Esophagus squamous epithelium (tissue), 5 donors: ENCODE measurements at regions of chr18 and their contacts with region 1.

Region 1: GRCh38 chr18:76398896-76399612 is 96.0 kb downstream of the ZNF516 start:
- DNase-seq: no peak
- H3K4me3 ChIP-seq: no peak overlapping the region
- H3K27ac ChIP-seq: peak overlapping the region in 1 of 4 donors; percentile 26
- H3K4me1 ChIP-seq: peaks cover 4 to 24% (median 10%) of the 10 kb centered on the region in 3 donors
- H3K27me3 ChIP-seq: no peaks in the 10 kb centered on the region
- CTCF ChIP-seq: peak; percentile 84 to 97 (median 94)
- POLR2A ChIP-seq: no peak

Region 2: DNA sequence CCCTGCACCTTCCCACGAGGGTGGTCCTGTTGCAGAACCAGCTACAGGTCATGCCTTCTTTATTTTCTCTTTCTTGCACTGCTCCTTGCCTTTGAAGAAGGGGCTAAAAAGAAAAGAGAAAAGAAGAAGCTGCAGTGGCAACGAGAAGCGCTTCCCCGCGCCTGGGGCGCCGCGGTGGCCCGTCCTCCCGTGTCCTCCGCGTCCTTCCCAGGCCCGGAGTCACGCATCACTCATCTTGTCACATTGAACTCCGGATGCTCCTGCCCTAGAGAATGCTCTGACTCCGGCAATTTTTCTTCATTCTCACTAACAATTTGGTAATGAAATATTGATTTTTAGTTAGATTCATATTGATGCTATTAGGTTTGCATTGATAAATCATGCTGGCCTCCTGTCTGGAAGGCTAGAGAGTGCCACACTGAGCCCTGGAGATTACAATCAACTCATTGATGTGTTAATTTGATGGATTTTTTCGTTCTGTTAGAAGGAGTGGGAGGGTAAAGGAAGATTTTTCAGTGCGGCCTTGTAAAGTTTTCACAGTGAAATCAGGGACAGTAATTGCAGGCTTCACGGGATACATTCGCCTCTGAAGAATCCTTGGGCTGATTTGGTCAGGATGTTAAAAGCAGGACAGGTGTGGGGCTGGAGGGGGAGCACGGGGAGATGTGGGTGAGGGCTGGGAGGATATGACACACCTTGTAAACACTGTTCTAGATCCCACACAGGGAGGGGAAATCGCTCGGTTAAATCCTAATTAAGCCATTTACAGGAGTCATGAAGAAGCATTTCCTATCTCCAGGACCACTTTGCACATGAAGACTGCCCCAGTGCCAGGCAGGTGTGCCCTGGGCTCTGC is 253.3 kb before region 1 on chr18:
- intact Hi-C with region 1: no loop called
- DNase-seq: no peak
- H3K4me3 ChIP-seq: no peak overlapping the region
- H3K27ac ChIP-seq: no peak overlapping the region
- H3K4me1 ChIP-seq: no peaks in the 10 kb centered on the region
- H3K27me3 ChIP-seq: no peaks in the 10 kb centered on the region
- CTCF ChIP-seq: no peak
- POLR2A ChIP-seq: no peak

Region 3: DNA sequence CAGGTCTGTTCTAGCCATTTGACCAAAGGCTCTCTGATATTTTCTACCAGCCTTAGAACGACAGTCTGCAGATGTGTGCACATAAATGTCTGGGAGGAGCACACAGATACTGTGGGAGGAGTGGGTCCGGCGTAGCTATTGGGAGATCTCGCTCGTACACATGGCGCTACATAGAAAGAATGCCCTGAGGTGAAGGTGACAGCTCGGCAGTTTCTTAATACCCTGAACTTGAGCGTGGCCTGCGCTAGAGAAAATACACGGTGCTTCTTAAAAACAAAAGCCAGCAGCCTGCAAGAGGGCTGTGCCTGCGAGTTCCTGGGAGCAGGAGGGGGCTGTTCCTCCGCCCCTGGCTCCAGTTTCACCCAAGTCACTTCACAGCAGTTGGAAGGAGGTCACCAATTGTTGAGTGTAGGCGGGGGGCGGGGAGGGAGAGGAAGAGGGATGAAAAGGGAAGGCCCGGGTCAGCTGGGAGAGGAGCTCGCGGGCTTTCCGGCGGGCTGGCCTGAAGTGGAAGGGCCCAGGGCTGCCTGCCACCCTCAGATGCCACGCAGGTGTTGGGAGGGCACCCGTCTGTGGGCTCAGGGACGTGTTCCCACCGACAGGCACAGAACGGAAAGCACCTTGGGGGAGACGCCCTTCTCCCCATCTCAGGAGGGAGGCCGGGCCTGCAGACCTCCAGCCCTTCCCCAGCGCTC is 220.7 kb after region 1 on chr18:
- intact Hi-C with region 1: loop called (anchors 5 kb)
- DNase-seq: no peak
- H3K4me3 ChIP-seq: peak overlapping the region; percentile 19 to 61 (median 44)
- H3K27ac ChIP-seq: peak overlapping the region; percentile 76 to 88 (median 84)
- H3K4me1 ChIP-seq: peaks cover 11 to 36% (median 24%) of the 10 kb centered on the region in 3 donors
- H3K27me3 ChIP-seq: no peaks in the 10 kb centered on the region
- CTCF ChIP-seq: no peak
- POLR2A ChIP-seq: no peak

Region 4: DNA sequence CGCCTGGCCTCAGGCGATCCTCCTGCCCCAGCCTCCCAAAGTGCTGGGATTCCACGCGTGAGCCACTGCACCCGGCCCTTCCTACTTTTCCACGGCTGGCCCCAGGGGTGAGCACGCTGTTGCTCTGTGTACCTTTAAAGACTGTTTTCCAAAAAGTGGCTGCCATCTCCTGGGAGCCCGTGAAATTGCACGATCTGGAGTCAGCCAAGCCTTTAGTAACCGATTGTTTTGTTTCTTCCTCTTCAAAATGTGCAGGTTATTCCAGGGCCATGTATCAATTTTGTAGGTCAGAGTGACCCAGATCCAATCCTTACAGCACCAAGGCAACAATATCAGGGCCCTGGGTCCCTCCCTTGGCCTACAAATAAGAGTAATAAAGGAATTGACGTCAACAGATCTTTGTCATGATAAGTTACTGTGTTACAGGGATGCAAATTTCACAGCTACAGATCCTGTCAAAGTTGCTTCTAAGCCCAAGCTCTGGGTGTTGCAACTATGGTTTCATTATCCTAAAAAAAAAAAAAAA is 287.7 kb after region 1 on chr18:
- intact Hi-C with region 1: loop called (anchors 5 kb)
- DNase-seq: no peak
- H3K4me3 ChIP-seq: no peak overlapping the region
- H3K27ac ChIP-seq: peak overlapping the region in 2 of 4 donors; percentile 42 to 70
- H3K4me1 ChIP-seq: peaks cover 0 to 28% (median 9%) of the 10 kb centered on the region in 3 donors
- H3K27me3 ChIP-seq: peaks cover 0 to 34% (median 0%) of the 10 kb centered on the region in 4 donors
- CTCF ChIP-seq: peak; percentile 30 to 76 (median 59)
- POLR2A ChIP-seq: no peak

Region 5: GRCh38 chr18:76709659-76710645 is 310.9 kb after region 1 on chr18:
- intact Hi-C with region 1: loop called (anchors 5 kb)
- DNase-seq: no peak
- H3K4me3 ChIP-seq: peak overlapping the region in 1 of 4 donors; percentile 44
- H3K27ac ChIP-seq: no peak overlapping the region
- H3K4me1 ChIP-seq: peaks cover 0 to 5% (median 0%) of the 10 kb centered on the region in 3 donors
- H3K27me3 ChIP-seq: no peaks in the 10 kb centered on the region
- CTCF ChIP-seq: peak; percentile 80 to 93 (median 90)
- POLR2A ChIP-seq: no peak

Region 6: DNA sequence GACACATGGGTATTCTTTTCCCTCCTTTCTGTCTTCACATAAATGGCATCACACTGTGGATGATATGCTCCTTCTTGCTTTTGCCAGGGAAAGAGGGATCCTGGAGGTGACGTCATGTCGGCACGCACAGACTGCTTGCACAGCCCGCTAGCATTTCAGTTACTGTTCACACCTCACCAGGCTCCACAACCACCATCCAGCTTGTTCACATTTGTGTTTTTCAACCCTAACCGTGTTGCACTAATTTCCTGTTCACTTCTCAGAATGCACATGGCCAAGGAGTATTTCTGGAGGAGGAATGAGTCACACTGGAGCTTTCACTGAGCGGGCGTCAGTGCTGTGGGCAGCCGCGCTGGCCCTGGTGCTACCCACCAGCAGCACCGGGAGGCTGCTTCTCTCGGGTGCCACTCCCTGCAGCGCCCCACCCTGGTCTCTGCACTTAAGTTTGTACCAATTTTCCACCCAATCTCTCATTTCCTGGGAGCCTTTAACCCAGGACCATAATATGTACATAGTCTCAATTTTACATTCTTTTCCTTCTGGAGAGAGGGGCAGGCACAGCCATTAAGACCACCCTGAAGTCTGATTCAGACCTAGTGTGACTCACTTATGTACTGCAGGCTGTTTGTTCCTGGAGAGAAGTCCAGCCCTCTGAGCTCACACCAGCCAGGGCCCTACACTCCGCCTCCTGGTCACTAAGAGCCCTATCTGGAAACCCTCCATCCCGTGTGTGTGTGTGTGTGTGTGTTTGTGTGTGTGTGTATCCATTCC is 668.4 kb after region 1 on chr18:
- intact Hi-C with region 1: no loop called
- DNase-seq: no peak
- H3K4me3 ChIP-seq: peak overlapping the region in 1 of 4 donors; percentile 31
- H3K27ac ChIP-seq: peak overlapping the region; percentile 77 to 93 (median 84)
- H3K4me1 ChIP-seq: peaks cover 54 to 97% (median 74%) of the 10 kb centered on the region in 3 donors
- H3K27me3 ChIP-seq: no peaks in the 10 kb centered on the region
- CTCF ChIP-seq: no peak
- POLR2A ChIP-seq: peak in 1 of 4 donors; percentile 41